Activated T-helper 2 cell treated with anti-CD3 and anti-CD28 coated beads, Interferon-gamma antibody, Interleukin-2, Interleukin-4, amounts not matched to agents 10 μg/mL and 5 μg/mL and 100 μg/mL, durations not matched to agents 14 hours and 24 hours and 36 hours (primary cell): ENCODE measurements at regions of chr2 and their contacts with region 1.

Region 1: GRCh38 chr2:43219383-43220228 is 6.8 kb downstream of the ZFP36L2 start:
- DNase-seq: peak; percentile 82
- H3K4me3 Mint-ChIP-seq: peak overlapping the region; percentile 82
- H3K27ac Mint-ChIP-seq: peak overlapping the region; percentile 94
- H3K4me1 Mint-ChIP-seq: peaks cover 35% of the 10 kb centered on the region
- H3K27me3 Mint-ChIP-seq: no peaks in the 10 kb centered on the region

Region 2: GRCh38 chr2:43000242-43001054 is 219.2 kb before region 1 on chr2:
- intact Hi-C with region 1: no loop called
- DNase-seq: no peak
- H3K4me3 Mint-ChIP-seq: no peak overlapping the region
- H3K27ac Mint-ChIP-seq: no peak overlapping the region
- H3K4me1 Mint-ChIP-seq: no peaks in the 10 kb centered on the region
- H3K27me3 Mint-ChIP-seq: peaks cover 10% of the 10 kb centered on the region

Region 3: GRCh38 chr2:43136876-43137275 is 82.7 kb before region 1 on chr2:
- intact Hi-C with region 1: loop called (anchors 1 kb)
- DNase-seq: peak; percentile 81
- H3K4me3 Mint-ChIP-seq: peak overlapping the region; percentile 58
- H3K27ac Mint-ChIP-seq: peak overlapping the region; percentile 94
- H3K4me1 Mint-ChIP-seq: peaks cover 71% of the 10 kb centered on the region
- H3K27me3 Mint-ChIP-seq: no peaks in the 10 kb centered on the region

Region 4: DNA sequence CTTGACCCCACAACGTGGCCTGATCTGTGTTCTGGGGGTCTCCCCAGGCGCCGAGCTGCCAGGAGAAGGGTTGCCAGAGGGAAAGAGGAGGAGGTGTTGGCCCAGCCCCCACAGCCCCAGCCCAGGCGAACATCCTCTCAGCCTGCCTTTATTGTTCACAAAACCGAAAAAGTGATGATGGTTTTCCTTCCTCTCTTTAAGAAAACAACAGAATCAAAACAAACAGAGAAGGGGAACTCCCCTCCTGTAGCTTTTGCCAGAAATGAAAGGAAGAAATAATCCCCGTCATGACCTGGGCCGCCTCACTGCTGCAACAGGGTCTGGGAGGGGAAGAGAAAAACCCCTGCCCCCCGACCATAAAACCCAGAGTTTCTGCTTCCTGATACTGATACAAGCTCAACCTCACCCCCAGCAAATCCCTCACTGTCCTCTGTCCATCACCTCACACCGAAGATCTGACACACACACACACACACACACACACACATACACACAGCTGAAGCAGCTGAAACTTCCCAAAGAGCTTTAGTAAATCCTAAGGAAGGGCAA is 45.2 kb before region 1 on chr2:
- intact Hi-C with region 1: loop called (anchors 1 kb)
- DNase-seq: peak; percentile 73
- H3K4me3 Mint-ChIP-seq: peak overlapping the region; percentile 38
- H3K27ac Mint-ChIP-seq: peak overlapping the region; percentile 91
- H3K4me1 Mint-ChIP-seq: peaks cover 69% of the 10 kb centered on the region
- H3K27me3 Mint-ChIP-seq: no peaks in the 10 kb centered on the region

Region 5: DNA sequence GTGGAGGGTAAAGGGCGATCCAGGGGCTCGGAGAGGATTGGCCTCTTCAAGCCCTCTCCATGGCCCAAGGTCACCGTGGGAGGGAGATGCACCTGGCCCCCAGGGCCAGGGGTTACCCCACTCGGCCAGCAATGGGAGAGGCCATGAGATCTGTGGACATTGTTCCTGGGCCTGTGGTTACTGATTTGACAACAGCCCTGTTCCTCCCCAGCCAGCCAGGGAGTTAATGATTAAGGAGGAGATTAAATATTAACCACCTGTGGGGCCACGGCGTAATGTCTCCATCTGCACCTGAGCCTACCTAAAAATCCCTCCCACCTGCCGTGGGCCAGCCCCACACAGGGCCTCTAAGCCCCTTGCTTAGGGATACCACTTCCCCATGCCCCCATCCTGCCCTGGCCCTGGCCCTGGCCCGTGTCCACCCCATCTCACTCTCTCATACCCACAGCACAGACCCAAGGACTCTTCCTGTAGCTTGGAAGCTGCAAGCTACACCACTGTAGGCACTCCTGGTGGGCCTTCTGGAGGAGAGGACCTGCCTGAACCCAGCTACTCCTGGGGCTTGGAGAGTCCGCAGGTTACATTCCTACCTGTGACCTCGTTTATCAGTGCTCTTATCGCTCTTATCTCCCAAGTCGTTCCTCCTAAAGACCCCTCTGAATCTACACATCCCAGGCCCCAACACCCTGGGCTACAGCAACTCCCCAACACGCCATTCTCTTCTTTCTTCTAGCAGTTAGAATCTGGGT is 25.3 kb before region 1 on chr2:
- intact Hi-C with region 1: loop called (anchors 2 kb)
- DNase-seq: no peak
- H3K4me3 Mint-ChIP-seq: peak overlapping the region; percentile 58
- H3K27ac Mint-ChIP-seq: peak overlapping the region; percentile 86
- H3K4me1 Mint-ChIP-seq: peaks cover 41% of the 10 kb centered on the region
- H3K27me3 Mint-ChIP-seq: no peaks in the 10 kb centered on the region

Region 6: DNA sequence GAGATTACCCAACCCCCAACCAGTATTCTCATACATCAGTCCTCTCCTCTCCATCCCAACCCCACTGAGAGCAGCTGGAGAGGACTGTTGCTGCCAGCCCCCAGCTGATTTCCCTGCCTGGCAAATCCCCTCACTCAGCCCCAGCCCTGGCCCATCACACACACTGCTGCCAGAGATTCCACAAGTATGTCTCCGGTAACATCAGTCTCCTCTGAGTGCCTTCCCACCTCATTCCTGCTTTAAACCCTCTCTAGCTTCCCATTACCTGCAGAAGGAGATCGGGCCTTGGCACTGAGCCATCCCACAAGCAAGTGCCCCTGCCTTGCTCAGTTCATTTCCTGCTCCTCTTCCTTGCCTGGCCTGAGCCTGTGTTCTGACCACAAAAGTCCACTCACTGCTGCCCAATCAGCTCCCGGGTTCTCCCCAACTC is 57.4 kb after region 1 on chr2:
- intact Hi-C with region 1: no loop called
- DNase-seq: no peak
- H3K4me3 Mint-ChIP-seq: no peak overlapping the region
- H3K27ac Mint-ChIP-seq: no peak overlapping the region
- H3K4me1 Mint-ChIP-seq: peaks cover 12% of the 10 kb centered on the region
- H3K27me3 Mint-ChIP-seq: no peaks in the 10 kb centered on the region